SK-N-SH (cell line): ENCODE measurements at regions of chr16 and their contacts with region 1.

Region 1: GRCh38 chr16:88442727-88443576 is 10.1 kb upstream of the ZFPM1 start:
- DNase-seq: peak; percentile 98
- H3K4me3 ChIP-seq: peak overlapping the region in 1 of 2 experiments; percentile 35; a peak in 1 of 4 replicates
- H3K27ac ChIP-seq: no peak overlapping the region; a peak in 1 of 4 replicates
- H3K4me1 ChIP-seq: peaks cover 0 to 15% of the 10 kb centered on the region in 2 experiments; a peak in 1 of 4 replicates
- H3K27me3 ChIP-seq: no peaks in the 10 kb centered on the region
- CTCF ChIP-seq: peak; percentile 89
- EP300 ChIP-seq: no peak
- RAD21 ChIP-seq: peak; percentile 98

Region 2: DNA sequence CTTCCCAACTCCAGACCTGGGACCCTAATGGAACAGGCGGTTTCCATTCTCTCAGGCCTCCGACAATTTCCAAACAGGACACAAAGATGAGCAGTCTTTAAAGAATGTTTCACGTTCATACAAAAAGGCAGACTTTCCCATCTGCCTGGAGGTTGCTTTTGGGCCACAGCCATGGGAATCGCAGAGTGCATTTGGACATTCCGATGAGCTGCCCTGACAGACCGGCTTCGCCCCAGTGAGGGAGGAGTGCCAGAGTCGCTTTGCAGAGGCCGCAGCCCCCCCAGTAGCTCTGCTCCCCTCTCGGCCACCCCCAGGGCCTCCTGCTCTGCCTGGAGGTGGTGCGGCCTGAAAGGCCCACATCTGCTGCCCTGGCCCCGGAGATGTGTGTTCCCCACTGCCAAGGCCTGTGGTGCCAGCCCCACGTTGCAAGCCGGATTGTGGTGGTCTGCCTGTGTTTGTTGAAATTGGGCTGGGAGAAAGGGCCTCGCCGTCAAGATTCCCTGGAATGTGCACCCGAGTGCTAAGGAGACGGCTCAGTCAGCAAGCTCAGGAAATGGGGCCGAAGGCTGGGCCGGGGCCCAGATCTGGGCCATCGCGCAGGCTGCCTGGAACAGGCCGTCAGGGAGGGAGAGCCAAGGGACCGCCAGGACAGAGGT is 1215.5 kb before region 1 on chr16:
- CTCF ChIA-PET with region 1: no interaction called
- POLR2A ChIA-PET with region 1: no interaction called
- DNase-seq: no peak
- H3K4me3 ChIP-seq: no peak overlapping the region
- H3K27ac ChIP-seq: no peak overlapping the region
- H3K4me1 ChIP-seq: no peaks in the 10 kb centered on the region
- H3K27me3 ChIP-seq: peaks cover 33% of the 10 kb centered on the region
- CTCF ChIP-seq: no peak
- EP300 ChIP-seq: no peak
- RAD21 ChIP-seq: no peak

Region 3: DNA sequence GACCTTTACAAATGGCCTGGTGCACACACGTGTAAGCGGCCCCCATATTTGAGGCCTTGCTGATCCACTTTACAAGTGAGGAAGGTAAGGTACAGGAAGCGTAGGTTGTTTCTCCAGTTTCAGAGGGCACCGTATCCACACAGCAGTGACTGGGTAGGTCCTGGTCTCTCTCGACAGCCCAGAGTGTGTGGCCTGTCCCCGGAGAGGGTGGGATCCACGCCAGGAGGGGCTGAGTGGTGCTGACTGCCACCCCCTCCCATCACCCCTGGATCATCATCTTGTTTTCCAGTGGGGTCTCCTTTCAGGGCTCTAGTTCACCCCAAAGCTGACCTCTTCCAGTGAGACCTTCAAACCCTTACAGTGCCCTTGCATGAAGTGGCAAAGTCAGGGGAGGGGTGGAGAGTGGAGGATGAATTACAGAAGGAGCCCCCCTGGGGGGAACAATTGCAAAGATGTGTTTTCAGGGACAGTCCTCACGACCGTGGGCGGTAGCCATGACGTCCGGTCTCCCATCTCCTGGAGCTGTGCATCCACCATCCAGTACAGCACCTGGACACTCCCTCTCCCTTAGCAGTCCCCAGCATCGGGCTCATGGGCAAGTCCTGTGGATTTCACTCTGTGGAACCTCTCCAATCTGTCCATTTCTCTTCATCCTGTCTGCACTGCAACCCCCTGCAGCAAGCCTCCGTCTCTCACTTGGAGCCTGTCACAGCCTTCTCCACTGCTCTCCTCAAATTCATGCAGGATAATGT is 496.2 kb before region 1 on chr16:
- CTCF ChIA-PET with region 1: no interaction called
- POLR2A ChIA-PET with region 1: no interaction called
- DNase-seq: no peak
- H3K4me3 ChIP-seq: no peak overlapping the region
- H3K27ac ChIP-seq: no peak overlapping the region
- H3K4me1 ChIP-seq: peaks cover 0 to 14% of the 10 kb centered on the region in 2 experiments; a peak in 1 of 4 replicates
- H3K27me3 ChIP-seq: no peaks in the 10 kb centered on the region
- CTCF ChIP-seq: no peak
- EP300 ChIP-seq: no peak
- RAD21 ChIP-seq: no peak

Region 4: DNA sequence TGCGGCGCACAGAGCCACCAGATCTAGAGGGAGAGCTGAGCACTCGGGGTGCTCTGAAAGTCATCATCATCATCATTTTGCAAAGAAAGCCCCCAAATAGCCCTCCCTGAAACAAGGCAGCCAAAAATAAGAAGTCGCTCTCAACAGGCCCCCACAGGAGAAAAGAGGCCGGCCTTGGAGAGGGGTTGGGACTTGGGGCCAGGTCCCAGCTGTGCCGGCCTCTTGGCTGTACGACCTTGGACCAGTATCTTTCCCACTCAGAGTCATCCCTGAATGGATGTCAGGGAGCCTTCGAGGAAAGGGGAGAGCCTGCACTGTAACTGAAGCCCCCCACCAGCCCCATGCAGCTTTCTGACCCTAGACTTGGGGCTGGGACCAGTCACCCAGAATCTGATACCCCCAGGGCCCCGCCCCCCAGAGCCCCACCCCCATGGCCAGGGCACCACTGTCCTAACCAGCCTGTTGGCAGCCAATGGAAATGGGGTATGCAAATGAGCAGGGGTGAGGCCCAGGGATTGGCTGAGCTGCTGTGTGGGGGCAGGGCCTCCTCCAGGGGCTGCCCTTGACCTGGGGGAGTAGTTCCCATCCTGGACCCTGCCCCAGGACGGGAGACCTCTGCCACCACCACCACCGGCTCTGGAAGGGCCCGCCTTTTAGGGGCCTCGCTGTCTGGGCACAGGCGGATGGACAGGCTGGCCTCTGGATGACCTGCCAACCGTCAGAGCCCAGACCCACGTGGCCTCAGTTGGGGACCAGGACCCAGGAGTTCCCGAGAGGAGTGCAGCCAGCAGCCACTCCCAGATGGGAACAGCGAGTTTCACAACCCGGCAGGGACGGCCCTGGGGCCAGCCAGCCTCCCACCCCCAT is 25.6 kb after region 1 on chr16:
- CTCF ChIA-PET with region 1: no interaction called
- POLR2A ChIA-PET with region 1: no interaction called
- DNase-seq: peak; percentile 89
- H3K4me3 ChIP-seq: no peak overlapping the region
- H3K27ac ChIP-seq: no peak overlapping the region; a peak in 1 of 4 replicates
- H3K4me1 ChIP-seq: peaks cover 0 to 55% of the 10 kb centered on the region in 2 experiments; a peak in 2 of 4 replicates
- H3K27me3 ChIP-seq: no peaks in the 10 kb centered on the region
- CTCF ChIP-seq: no peak
- EP300 ChIP-seq: no peak
- RAD21 ChIP-seq: no peak

Region 5: DNA sequence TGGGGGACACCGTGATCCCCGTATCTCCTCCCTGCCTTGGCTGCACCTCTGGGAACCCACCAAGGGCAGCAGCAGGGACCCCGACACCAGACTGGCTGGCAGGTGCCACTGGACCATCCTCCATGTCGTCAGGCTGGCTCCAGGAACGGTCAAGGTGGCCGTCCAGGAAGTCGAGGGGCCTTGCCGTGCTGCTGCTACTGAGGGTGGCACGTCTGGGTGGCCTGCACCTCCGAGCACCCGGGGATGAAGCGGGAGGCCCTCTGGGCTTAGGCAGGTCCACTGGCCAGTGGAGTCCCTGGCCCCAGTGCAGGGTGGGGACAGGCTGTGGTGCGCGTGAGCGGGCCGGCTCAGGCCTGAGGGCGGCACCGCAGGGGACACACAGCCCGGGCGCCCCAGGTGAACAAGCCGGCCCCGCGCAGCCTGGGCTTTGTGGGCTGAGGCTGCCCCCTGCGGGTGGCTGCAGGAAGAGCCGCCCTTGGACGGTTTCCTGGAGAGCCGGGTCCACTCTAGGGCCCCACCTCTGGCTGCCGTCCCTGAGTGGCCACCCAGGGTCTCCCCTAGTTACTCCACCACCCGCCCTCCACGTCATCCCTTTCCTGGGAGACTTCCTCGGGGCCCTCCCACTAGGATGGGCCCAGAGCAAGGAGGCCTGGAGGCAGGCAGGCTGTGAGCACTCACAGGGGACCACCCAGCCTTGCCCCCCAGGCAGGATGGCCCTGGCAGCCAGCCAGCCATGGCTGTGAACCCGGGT is 84.4 kb after region 1 on chr16:
- CTCF ChIA-PET with region 1: interaction called, 16 read pairs
- POLR2A ChIA-PET with region 1: no interaction called
- DNase-seq: peak; percentile 95
- H3K4me3 ChIP-seq: peak overlapping the region in 1 of 2 experiments; percentile 48; a peak in 1 of 4 replicates
- H3K27ac ChIP-seq: peak overlapping the region in 1 of 2 experiments; percentile 22; a peak in 1 of 4 replicates
- H3K4me1 ChIP-seq: peaks cover 0 to 9% of the 10 kb centered on the region in 2 experiments; a peak in 1 of 4 replicates
- H3K27me3 ChIP-seq: no peaks in the 10 kb centered on the region
- CTCF ChIP-seq: peak; percentile 69
- EP300 ChIP-seq: no peak
- RAD21 ChIP-seq: peak; percentile 89

Region 6: GRCh38 chr16:88700636-88701482 is 257.9 kb after region 1 on chr16:
- CTCF ChIA-PET with region 1: no interaction called
- POLR2A ChIA-PET with region 1: no interaction called
- DNase-seq: no peak
- H3K4me3 ChIP-seq: no peak overlapping the region; a peak in 1 of 4 replicates
- H3K27ac ChIP-seq: peak overlapping the region in 1 of 2 experiments; percentile 44; a peak in 2 of 4 replicates
- H3K4me1 ChIP-seq: peaks cover 8 to 13% of the 10 kb centered on the region in 2 experiments; a peak in 3 of 4 replicates
- H3K27me3 ChIP-seq: no peaks in the 10 kb centered on the region
- CTCF ChIP-seq: no peak
- EP300 ChIP-seq: no peak; a peak in 1 of 4 replicates
- RAD21 ChIP-seq: no peak